ENCODE measurements at regions of chr17 and their contacts with region 1.

Region 1: DNA sequence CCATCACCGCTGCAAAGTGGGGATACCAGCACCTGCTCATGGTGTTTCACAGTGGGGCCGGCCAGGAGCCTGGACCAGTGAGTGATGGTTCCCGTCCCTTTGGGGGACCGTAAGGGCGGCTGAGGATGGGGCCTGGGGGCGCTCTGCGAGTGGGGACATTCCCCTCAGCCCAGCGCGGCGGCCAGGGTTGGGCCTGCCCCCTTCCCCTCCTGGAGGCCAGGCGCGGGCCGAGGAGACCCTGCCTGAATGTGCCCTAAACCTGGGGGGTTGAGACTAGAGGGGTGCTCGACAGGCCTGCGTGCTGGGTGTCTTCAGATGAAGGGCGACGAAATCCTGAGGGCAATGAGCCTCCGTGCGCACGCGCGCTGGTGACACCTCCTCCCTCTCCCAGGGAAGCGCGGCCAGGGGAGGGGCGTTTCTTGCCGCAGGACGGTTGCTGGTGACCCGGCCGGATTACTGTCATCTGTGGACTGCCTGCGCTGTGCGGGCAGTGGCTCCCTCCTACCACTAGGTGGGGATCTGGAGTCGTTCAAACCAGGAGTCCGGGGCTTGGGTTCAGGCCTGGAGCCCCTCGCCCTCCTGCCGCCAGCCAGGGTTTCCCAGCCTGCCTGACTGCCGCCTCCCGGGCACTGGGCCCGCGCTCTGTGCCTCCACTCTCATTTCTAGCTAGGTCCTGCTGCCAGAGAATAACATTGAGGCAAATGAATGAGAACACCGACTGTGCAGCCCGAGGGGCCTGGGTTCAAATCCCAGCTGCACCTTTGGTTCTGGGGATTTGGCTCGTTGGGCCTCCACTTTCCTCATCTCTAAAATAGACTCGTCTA is 17.1 kb downstream of the TBX2 start:
- DNase-seq: peak; percentile 80
- H3K4me3 ChIP-seq: no peak overlapping the region
- H3K27ac ChIP-seq: no peak overlapping the region
- H3K4me1 ChIP-seq: no peaks in the 10 kb centered on the region
- H3K27me3 ChIP-seq: peaks cover 6% of the 10 kb centered on the region
- CTCF ChIP-seq: peak; percentile 95

Region 2: GRCh38 chr17:61349350-61349749 is 67.4 kb before region 1 on chr17:
- intact Hi-C with region 1: no loop called
- DNase-seq: no peak
- H3K4me3 ChIP-seq: no peak overlapping the region
- H3K27ac ChIP-seq: no peak overlapping the region
- H3K4me1 ChIP-seq: no peaks in the 10 kb centered on the region
- H3K27me3 ChIP-seq: no peaks in the 10 kb centered on the region
- CTCF ChIP-seq: no peak

Region 3: GRCh38 chr17:61551255-61551742 is 134.5 kb after region 1 on chr17:
- intact Hi-C with region 1: loop called (anchors 2 kb)
- DNase-seq: no peak
- H3K4me3 ChIP-seq: no peak overlapping the region
- H3K27ac ChIP-seq: no peak overlapping the region
- H3K4me1 ChIP-seq: no peaks in the 10 kb centered on the region
- H3K27me3 ChIP-seq: peaks cover 5% of the 10 kb centered on the region
- CTCF ChIP-seq: peak; percentile 57

Region 4: GRCh38 chr17:61766516-61766915 is 349.8 kb after region 1 on chr17:
- intact Hi-C with region 1: no loop called
- DNase-seq: no peak
- H3K4me3 ChIP-seq: no peak overlapping the region
- H3K27ac ChIP-seq: no peak overlapping the region
- H3K4me1 ChIP-seq: no peaks in the 10 kb centered on the region
- H3K27me3 ChIP-seq: no peaks in the 10 kb centered on the region
- CTCF ChIP-seq: no peak

Measured in colonic mucosa (tissue), 4 donors.